Right ventricle myocardium inferior (tissue), 1 donor: ENCODE measurements at regions of chr9 and their contacts with region 1.

Region 1: DNA sequence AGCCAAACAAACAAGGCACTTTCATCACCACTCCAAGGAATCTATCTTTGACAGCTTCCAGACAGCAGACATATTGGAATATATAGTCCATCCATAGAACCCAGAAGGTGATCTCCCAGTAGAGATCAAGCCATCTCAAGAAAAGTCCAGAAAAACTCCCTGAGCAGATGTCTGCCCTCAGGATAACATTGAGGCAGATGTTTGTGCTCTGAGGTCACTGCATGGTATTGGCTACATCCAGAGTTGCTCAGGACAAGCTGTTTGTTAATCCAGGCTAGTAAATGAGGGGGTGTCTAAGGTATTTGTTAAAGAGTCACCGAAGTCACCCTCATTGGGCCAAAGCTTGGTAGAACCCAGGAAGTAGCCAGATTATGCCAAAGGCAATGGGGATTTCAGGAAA is 556.3 kb upstream of the KLF4 start:
- DNase-seq: no peak
- ATAC-seq: no peak

Region 2: GRCh38 chr9:108062680-108063079 is 16.8 kb after region 1 on chr9:
- intact Hi-C with region 1: loop called (anchors 1 kb)
- DNase-seq: no peak
- ATAC-seq: no peak